Vagina (tissue), 2 donors: ENCODE measurements at regions of chr10 and their contacts with region 1.

Region 1: GRCh38 chr10:37754538-37755323 is 102.7 kb downstream of the ZNF248 start:
- DNase-seq: no peak
- H3K4me3 ChIP-seq: no peak overlapping the region
- H3K27ac ChIP-seq: no peak overlapping the region
- H3K4me1 ChIP-seq: no peaks in the 10 kb centered on the region
- H3K27me3 ChIP-seq: no peaks in the 10 kb centered on the region
- CTCF ChIP-seq: no peak
- POLR2A ChIP-seq: no peak

Region 2: GRCh38 chr10:37456456-37456855 is 298.3 kb before region 1 on chr10:
- intact Hi-C with region 1: no loop called
- DNase-seq: no peak
- H3K4me3 ChIP-seq: no peak overlapping the region
- H3K27ac ChIP-seq: no peak overlapping the region
- H3K4me1 ChIP-seq: no peaks in the 10 kb centered on the region
- H3K27me3 ChIP-seq: no peaks in the 10 kb centered on the region
- CTCF ChIP-seq: no peak
- POLR2A ChIP-seq: no peak

Region 3: GRCh38 chr10:37737336-37737735 is 17.4 kb before region 1 on chr10:
- intact Hi-C with region 1: loop called (anchors 1 kb)
- DNase-seq: no peak
- H3K4me3 ChIP-seq: no peak overlapping the region
- H3K27ac ChIP-seq: no peak overlapping the region
- H3K4me1 ChIP-seq: no peaks in the 10 kb centered on the region
- H3K27me3 ChIP-seq: no peaks in the 10 kb centered on the region
- CTCF ChIP-seq: no peak
- POLR2A ChIP-seq: no peak

Region 4: GRCh38 chr10:37794305-37794976 is 39.7 kb after region 1 on chr10:
- intact Hi-C with region 1: no loop called
- DNase-seq: no peak
- H3K4me3 ChIP-seq: no peak overlapping the region
- H3K27ac ChIP-seq: no peak overlapping the region
- H3K4me1 ChIP-seq: no peaks in the 10 kb centered on the region
- H3K27me3 ChIP-seq: no peaks in the 10 kb centered on the region
- CTCF ChIP-seq: no peak
- POLR2A ChIP-seq: no peak